Ovary (tissue), 10 donors: ENCODE measurements at regions of chr9 and their contacts with region 1.

Region 1: GRCh38 chr9:119289740-119290433 is 79.3 kb downstream of the BRINP1 start:
- DNase-seq: no peak
- H3K4me3 ChIP-seq: no peak overlapping the region
- H3K27ac ChIP-seq: no peak overlapping the region
- H3K4me1 ChIP-seq: no peaks in the 10 kb centered on the region
- H3K27me3 ChIP-seq: no peaks in the 10 kb centered on the region
- CTCF ChIP-seq: no peak
- EP300 ChIP-seq: no peak
- POLR2A ChIP-seq: no peak

Region 2: GRCh38 chr9:118711843-118712242 is 578.0 kb before region 1 on chr9:
- intact Hi-C with region 1: loop called in 1 of 4 experiments (anchors 10 kb)
- DNase-seq: no peak
- H3K4me3 ChIP-seq: no peak overlapping the region
- H3K27ac ChIP-seq: no peak overlapping the region
- H3K4me1 ChIP-seq: no peaks in the 10 kb centered on the region
- H3K27me3 ChIP-seq: no peaks in the 10 kb centered on the region
- CTCF ChIP-seq: no peak
- EP300 ChIP-seq: no peak
- POLR2A ChIP-seq: no peak

Region 3: DNA sequence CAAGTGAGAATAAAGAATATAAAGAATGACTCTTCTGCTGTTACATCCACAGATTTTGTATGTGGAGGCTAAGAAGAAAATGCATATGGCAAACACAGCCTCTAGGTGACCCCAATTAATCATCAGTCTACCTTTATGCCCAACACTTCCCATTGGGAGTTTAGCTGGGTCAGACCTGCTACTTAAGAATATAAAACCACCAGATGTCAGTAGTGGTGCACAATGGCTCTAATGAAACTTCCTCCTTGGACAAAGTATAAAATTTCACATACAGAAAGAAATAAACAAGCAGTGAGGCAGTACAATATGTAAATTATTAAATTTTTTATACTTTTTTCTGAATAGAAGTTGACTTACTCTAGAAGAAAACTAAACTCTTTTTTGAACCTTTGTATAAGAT is 460.6 kb before region 1 on chr9:
- intact Hi-C with region 1: loop called in 1 of 4 experiments (anchors 5 kb)
- DNase-seq: no peak
- H3K4me3 ChIP-seq: no peak overlapping the region
- H3K27ac ChIP-seq: no peak overlapping the region
- H3K4me1 ChIP-seq: no peaks in the 10 kb centered on the region
- H3K27me3 ChIP-seq: no peaks in the 10 kb centered on the region
- CTCF ChIP-seq: no peak
- EP300 ChIP-seq: no peak
- POLR2A ChIP-seq: no peak

Region 4: GRCh38 chr9:119224431-119224830 is 65.5 kb before region 1 on chr9:
- intact Hi-C with region 1: no loop called
- DNase-seq: no peak
- H3K4me3 ChIP-seq: no peak overlapping the region
- H3K27ac ChIP-seq: no peak overlapping the region
- H3K4me1 ChIP-seq: no peaks in the 10 kb centered on the region
- H3K27me3 ChIP-seq: no peaks in the 10 kb centered on the region
- CTCF ChIP-seq: no peak
- EP300 ChIP-seq: no peak
- POLR2A ChIP-seq: no peak

Region 5: GRCh38 chr9:119240546-119240945 is 49.3 kb before region 1 on chr9:
- intact Hi-C with region 1: no loop called
- DNase-seq: no peak
- H3K4me3 ChIP-seq: no peak overlapping the region
- H3K27ac ChIP-seq: no peak overlapping the region
- H3K4me1 ChIP-seq: no peaks in the 10 kb centered on the region
- H3K27me3 ChIP-seq: no peaks in the 10 kb centered on the region
- CTCF ChIP-seq: no peak
- EP300 ChIP-seq: no peak
- POLR2A ChIP-seq: no peak

Region 6: GRCh38 chr9:120212153-120212852 is 922.4 kb after region 1 on chr9:
- intact Hi-C with region 1: no loop called
- DNase-seq: no peak
- H3K4me3 ChIP-seq: no peak overlapping the region
- H3K27ac ChIP-seq: no peak overlapping the region
- H3K4me1 ChIP-seq: no peaks in the 10 kb centered on the region
- H3K27me3 ChIP-seq: no peaks in the 10 kb centered on the region
- CTCF ChIP-seq: no peak
- EP300 ChIP-seq: no peak
- POLR2A ChIP-seq: no peak